Posterior vena cava (tissue), 2 donors: ENCODE measurements at regions of chr2 and their contacts with region 1.

Region 1: GRCh38 chr2:118241128-118241527 is 152.9 kb downstream of the INSIG2 start:
- DNase-seq: no peak

Region 2: DNA sequence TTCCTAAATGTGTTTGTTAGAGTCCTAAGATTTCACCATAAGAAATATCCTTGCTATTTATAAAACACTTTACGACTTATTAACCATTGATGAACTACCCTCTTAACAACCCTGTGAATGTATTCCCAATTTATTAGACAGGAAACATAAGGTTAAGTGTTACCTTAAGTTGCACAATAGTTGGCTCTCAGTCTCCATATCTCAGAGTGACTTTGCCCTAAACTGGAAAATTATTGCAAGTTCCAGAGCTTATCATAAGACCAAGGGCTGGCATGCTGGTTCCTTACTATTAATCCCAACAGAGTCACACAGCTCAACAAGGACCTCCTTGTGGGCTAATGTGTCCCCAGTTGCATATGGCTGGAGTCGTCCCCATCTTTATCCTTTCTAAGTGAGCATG is 13.0 kb after region 1 on chr2:
- intact Hi-C with region 1: loop called in 1 of 2 experiments (anchors 1 kb)
- DNase-seq: no peak